Psoas muscle (tissue), 8 donors: ENCODE measurements at regions of chr17 and their contacts with region 1.

Region 1: DNA sequence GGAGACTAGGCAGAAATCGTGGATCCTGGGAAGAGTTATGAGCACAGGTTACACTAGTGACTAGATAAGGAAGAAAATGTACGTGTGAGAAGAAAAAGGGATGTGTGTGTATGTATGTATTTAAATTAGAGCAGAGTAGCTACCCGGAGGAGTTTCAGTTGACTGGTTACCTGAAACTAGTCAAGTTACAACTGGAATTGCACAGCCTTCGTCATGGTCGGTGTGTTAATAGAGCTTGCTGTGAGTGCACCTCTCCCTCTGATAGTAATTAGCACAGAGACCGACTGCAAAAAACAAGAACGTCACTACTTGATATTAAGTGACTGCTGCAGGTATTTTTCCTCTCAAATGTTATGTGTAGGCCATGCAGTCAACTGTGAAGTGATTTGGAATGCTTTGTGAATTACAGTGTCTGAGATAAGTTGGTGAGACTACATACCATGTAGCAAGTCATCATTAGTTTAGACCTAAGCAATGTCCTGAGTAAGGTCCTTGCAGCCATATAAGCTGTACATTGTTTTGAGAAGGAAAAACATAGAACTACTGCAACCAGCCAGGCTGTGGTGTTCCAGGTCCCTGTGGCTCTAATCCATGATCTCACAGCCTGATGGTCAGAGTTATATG is 95.7 kb downstream of the WNT3 start:
- DNase-seq: no peak
- ATAC-seq: no peak
- H3K4me3 ChIP-seq: no peak overlapping the region
- H3K27ac ChIP-seq: no peak overlapping the region
- H3K4me1 ChIP-seq: no peaks in the 10 kb centered on the region
- H3K27me3 ChIP-seq: no peaks in the 10 kb centered on the region
- CTCF ChIP-seq: no peak

Region 2: DNA sequence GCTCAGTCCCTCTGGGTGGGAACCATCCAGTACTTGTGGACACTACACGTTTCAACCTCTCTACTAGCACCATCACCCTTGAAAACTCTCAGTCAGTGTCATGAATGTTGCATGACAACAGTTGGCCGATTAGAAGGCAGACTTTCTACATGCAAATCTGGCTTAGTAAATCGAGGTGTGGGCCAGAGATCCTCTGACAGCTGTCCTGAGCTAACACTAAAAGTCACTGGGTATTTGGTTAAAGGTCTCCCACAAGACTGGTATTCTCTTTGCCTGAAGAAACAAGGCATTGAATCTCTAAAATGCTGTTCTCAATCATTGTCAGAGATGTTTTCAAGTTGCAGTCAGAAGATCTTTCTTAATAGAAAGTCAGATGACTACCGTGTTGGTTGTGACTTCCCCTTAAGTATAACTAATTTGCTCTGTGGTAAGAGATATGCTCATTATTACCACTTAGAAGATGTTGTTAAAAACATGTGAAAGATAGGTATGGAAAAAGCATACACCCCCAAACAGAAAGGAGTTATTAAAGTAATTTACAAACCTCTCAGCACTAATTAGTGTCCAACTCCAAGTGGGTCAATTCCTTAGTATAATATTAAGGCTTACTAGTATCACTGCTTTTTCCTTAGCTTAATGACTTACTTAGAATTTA is 33.4 kb after region 1 on chr17:
- intact Hi-C with region 1: no loop called
- DNase-seq: no peak
- ATAC-seq: no peak
- H3K4me3 ChIP-seq: no peak overlapping the region
- H3K27ac ChIP-seq: no peak overlapping the region
- H3K4me1 ChIP-seq: no peaks in the 10 kb centered on the region
- H3K27me3 ChIP-seq: no peaks in the 10 kb centered on the region
- CTCF ChIP-seq: no peak

Region 3: GRCh38 chr17:46770818-46771560 is 48.2 kb after region 1 on chr17:
- intact Hi-C with region 1: loop called in 1 of 2 experiments (anchors 5 kb)
- DNase-seq: peak in 1 of 2 donors; percentile 33
- ATAC-seq: peak; percentile 39 to 64 (median 48)
- H3K4me3 ChIP-seq: peak overlapping the region; percentile 61
- H3K27ac ChIP-seq: no peak overlapping the region
- H3K4me1 ChIP-seq: peaks cover 6% of the 10 kb centered on the region
- H3K27me3 ChIP-seq: peaks cover 0 to 51% (median 16%) of the 10 kb centered on the region in 3 donors
- CTCF ChIP-seq: no peak